GM10248 (cell line): ENCODE measurements at regions of chrX and their contacts with region 1.

Region 1: DNA sequence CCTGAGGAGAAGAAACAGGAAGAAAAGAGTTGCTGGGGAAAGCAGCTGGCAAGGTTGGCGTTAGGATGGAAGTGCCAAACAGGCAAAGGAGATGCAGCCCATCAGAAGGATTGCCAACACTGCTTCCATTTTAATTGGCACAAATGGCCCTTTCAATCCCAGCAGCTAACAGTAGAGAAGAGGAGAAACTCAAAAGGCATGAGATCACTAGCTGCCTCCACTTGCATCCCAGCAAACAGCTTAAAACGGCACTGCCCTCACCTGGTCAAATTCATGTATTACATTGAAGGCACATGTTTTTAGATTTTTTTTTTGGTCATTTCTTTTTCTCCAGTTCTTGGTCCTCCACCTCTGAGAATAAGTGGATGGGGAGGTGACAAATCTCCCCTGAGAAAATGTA is 14.9 kb upstream of the LOC101059915 start:
- DNase-seq: no peak
- CTCF ChIP-seq: peak; percentile 40

Region 2: DNA sequence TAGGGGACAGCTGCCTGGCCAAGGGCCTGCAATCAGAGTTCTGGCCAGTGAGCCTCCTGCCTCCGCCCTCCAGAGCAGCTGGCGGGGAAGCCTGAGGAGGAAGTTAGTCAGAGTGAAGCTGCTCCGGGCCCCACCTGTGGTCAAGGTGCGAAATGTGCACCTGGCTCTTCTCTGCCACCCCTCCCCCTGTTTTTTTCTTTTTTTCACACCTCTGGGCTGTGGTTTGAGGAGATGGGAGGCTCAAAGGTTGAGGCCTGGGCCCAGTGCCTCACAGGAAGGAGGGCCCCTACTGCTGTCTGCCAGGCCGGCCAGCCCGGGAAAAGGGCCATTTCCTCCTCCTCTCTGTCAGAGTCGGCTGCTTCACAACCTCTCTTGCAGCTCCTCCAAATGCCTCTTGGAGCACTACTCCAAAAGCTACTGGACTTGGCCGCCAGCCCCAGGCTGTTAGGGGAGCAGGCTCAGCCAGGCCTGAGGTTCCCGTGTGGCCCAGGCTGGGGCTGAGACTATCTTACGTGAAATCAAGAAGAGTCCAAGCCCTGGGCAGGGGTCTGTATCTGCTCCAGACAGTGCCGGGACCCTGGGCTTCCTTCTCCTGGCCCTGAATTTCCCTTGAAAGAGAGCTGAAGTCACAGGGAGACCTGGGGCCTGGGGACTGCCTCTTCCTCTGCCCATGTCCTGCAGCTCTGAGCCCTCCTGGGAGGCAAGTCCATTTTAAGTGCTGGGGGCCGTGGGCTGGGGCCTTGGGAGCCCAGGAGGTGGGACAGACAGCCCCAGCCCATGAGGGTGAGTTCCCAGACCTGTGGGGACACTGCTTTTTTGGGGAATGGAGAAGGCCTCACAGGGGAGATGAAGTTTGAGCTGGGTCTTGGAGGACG is 29.6 kb before region 1 on chrX:
- CTCF ChIA-PET with region 1: interaction called, 13 read pairs
- POLR2A ChIA-PET with region 1: no interaction called
- DNase-seq: peak; percentile 64
- CTCF ChIP-seq: no peak